Activated CD4-positive, alpha-beta memory T cell treated with anti-CD3 and anti-CD28 coated beads, Interleukin-2, amount 10 ng/mL, durations not matched to agents 7 days and 5 days (primary cell): ENCODE measurements at regions of chr1 and their contacts with region 1.

Region 1: DNA sequence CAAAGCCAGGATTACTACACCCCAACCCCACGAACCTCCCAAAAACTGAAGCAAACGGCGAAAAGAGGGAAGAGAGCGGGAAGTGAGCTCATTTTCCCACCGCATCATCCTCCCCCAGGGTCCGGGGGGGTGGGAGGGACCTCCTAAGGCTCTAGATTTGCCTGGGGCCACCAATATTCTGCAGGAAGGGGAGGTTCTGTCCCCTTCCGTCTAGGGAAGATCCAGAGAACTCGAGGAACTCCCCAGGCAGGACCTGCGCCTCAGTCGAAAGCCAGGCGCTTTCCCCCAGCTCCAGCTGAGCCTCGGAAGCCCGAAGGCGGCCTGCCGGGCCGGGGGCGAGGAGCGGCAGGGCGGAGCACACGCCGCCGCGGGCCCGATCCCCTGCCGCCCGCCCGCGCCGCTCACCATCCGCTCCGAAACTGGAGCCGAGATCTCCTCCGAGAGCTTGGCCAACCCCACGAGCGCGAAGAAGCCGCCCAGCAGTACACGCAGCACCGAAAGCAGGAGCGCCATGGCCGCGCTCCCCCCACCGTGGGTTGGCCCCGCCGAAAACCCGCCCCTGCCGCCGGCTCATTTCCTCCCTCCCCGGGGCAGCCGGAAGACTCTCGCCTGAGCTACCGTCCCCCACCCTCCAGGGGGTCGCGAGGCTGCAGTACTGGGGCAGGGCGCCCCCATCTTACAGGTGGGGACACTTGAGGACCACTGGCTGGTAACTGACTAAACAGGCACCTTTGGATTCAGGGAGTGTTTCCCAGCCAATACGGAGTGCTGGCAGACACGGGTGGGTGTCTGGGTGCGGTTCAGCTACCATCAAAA is at the start of gene TMEM35B:
- DNase-seq: peak; percentile 83
- H3K4me3 Mint-ChIP-seq: peak within 1 kb of the TSS; percentile 94
- H3K27ac Mint-ChIP-seq: peak within 1 kb of the TSS; percentile 81
- H3K4me1 Mint-ChIP-seq: peaks cover 39% of the 10 kb centered on the region
- H3K27me3 Mint-ChIP-seq: no peaks in the 10 kb centered on the region
- total RNA-seq, gene TMEM35B: 38.7 to 42.4 TPM

Region 2: GRCh38 chr1:34859446-34860200 is 125.4 kb before region 1 on chr1 and contains the start of gene SMIM12:
- CTCF ChIA-PET with region 1: interaction called, 7 read pairs
- POLR2A ChIA-PET with region 1: interaction called, 20 read pairs
- DNase-seq: peak; percentile 93
- H3K4me3 Mint-ChIP-seq: peak within 1 kb of the TSS; percentile 89
- H3K27ac Mint-ChIP-seq: peak within 1 kb of the TSS; percentile 84
- H3K4me1 Mint-ChIP-seq: peaks cover 55% of the 10 kb centered on the region
- H3K27me3 Mint-ChIP-seq: no peaks in the 10 kb centered on the region
- total RNA-seq, gene SMIM12: 45.9 to 48.5 TPM

Region 3: GRCh38 chr1:34970220-34970735 is 14.7 kb before region 1 on chr1:
- CTCF ChIA-PET with region 1: interaction called, 7 read pairs
- POLR2A ChIA-PET with region 1: interaction called, 17 read pairs
- DNase-seq: no peak
- H3K4me3 Mint-ChIP-seq: no peak overlapping the region
- H3K27ac Mint-ChIP-seq: no peak overlapping the region
- H3K4me1 Mint-ChIP-seq: peaks cover 11% of the 10 kb centered on the region
- H3K27me3 Mint-ChIP-seq: peaks cover 3% of the 10 kb centered on the region

Region 4: GRCh38 chr1:35079003-35079930 is 94.3 kb after region 1 on chr1 and contains the start of gene ZMYM1:
- CTCF ChIA-PET with region 1: interaction called, 4 read pairs
- POLR2A ChIA-PET with region 1: interaction called, 34 read pairs
- DNase-seq: peak; percentile 87
- H3K4me3 Mint-ChIP-seq: peak within 1 kb of the TSS; percentile 99
- H3K27ac Mint-ChIP-seq: peak within 1 kb of the TSS; percentile 99
- H3K4me1 Mint-ChIP-seq: peaks cover 41% of the 10 kb centered on the region
- H3K27me3 Mint-ChIP-seq: no peaks in the 10 kb centered on the region
- total RNA-seq, gene ZMYM1: 9.7 to 11.7 TPM